IMR-90 (cell line): ENCODE measurements at regions of chr10 and their contacts with region 1.

Region 1: DNA sequence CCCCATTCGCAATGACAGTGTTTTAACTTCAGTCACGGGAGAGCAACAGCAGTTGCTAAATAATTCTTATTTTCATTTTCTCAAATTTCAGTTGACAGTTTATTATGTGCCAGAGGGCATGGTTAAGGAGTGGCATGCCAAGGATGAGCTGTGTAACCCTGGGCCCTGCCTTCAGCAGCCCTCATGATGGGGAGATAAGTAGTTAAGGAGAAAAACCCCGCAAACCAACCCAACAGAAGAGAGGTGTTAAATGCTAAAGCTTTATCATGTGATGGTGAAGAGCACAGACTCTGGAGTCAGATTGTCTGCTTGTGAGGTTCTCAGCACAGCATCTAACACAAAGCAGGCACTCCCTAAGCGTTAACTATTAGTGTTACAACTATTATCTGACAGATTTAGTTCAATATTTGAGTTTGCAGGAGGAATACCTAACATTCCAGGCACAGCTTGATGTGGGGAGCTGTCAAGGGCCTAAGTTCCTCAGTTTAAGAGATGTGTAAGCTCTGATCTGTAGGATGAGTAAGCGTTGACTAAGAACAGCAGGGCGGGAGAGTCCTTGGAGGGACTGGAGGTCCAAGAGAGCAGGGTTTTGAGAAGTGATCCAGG is 29.6 kb downstream of the STAM start:
- DNase-seq: peak; percentile 95
- ATAC-seq: peak; percentile 97
- H3K4me3 ChIP-seq: no peak overlapping the region
- H3K27ac ChIP-seq: peak overlapping the region; percentile 92
- H3K4me1 ChIP-seq: peaks cover 20% of the 10 kb centered on the region
- H3K27me3 ChIP-seq: no peaks in the 10 kb centered on the region
- CTCF ChIP-seq: no peak
- POLR2A ChIP-seq: no peak
- RAD21 ChIP-seq: peak; percentile 17; the same call in 1 of the 2 replicates

Region 2: DNA sequence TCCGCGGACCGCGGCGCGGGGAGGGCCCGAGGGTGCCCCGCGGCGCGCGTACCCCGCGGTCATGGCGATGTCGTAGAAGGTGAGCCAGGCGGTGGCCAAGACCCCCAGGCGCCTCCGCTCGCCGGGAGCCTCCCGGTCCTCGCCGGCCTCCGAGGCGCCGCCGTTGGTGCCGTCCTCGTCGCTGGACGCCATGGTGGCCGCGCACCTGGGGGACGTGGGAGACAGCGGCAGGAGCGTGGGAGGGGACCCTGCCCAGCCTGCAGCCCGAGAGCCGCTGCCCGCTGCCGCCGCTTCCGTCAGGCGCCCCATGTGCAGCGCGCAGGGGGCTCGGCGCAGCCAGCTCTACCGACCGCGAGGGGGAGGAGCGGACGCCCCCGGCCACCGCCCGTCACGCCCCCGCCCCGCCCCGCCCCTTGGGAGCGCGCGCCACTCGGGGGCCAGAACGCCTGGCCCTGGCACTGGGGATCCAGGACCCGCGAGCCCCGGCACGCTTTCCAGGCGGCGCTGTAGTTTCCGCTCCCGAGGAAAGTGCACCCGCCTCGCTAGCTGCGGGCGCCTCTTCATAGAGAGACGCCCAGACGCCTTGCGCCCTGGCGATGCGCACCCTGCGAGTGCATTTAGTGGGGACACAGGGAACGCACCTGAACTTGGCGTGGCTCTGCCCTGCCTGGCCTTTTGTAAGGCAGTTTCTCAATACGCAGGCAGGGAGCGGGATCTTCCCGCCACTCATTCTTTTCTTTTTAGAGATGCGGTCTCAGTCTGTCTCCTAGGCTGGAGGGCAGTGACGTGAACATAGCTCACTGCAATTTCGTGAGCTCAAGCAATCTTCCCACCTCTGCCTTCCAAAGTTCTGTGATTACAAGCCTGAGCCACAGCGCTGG is 56.3 kb before region 1 on chr10 and contains the start of gene HACD1:
- CTCF ChIA-PET with region 1: no interaction called
- POLR2A ChIA-PET with region 1: no interaction called
- dilution Hi-C with region 1: no loop called
- in situ Hi-C with region 1: no loop called
- intact Hi-C with region 1: loop called (anchors 2 kb)
- DNase-seq: peak; percentile 75
- ATAC-seq: peak; percentile 87
- H3K4me3 ChIP-seq: peak within 1 kb of the TSS; percentile 61
- H3K27ac ChIP-seq: peak within 1 kb of the TSS; percentile 78
- H3K4me1 ChIP-seq: no peaks in the 10 kb centered on the region
- H3K27me3 ChIP-seq: no peaks in the 10 kb centered on the region
- CTCF ChIP-seq: peak; percentile 19; the same call in 1 of the 2 replicates
- POLR2A ChIP-seq: 0 out of 2 replicates have a peak, but pooled peaks have one; percentile 33
- RAD21 ChIP-seq: no peak
- total RNA-seq, gene HACD1: 10.0 and 23.6 TPM in 2 replicates

Region 3: DNA sequence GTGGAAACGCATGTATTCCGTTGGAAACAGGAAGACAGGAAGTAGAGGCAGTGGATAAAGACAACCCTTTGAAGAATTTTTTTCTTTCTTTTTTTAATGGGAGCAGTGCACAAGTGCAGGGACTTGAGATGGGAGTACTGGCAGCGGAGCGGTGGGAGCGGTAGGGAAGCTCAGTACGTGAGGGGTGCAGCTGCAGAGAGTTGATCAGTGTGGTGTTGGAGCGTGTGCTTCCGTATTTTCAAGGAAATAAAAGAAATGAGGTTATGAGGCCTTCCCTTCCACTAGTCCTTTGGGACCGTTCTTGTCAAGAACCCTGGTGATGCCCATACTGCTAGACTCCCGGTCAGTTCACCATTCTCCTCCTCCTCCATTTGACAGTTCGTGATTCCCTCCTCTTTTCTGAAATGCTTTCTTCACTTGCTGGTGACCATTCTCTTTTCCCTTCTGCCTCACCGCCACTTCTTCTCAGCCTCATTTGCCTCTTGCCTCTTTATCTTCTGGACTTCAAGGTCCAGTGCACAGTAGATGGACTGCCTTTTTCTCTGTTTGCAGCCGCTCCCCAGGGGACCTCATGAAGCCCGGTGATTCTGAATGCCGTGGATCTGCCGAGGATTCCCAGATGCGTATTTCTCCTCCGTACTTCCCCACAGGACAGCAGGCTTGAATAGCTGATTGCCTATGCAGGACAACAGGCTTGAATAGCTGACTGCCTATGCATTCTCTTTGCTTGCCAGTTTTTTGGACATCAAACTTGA is 39.3 kb after region 1 on chr10:
- CTCF ChIA-PET with region 1: no interaction called
- POLR2A ChIA-PET with region 1: no interaction called
- dilution Hi-C with region 1: no loop called
- in situ Hi-C with region 1: no loop called
- intact Hi-C with region 1: no loop called
- DNase-seq: no peak
- ATAC-seq: no peak
- H3K4me3 ChIP-seq: no peak overlapping the region
- H3K27ac ChIP-seq: no peak overlapping the region
- H3K4me1 ChIP-seq: no peaks in the 10 kb centered on the region
- H3K27me3 ChIP-seq: no peaks in the 10 kb centered on the region
- CTCF ChIP-seq: no peak
- POLR2A ChIP-seq: no peak
- RAD21 ChIP-seq: no peak